HCT116 (cell line): ENCODE measurements at regions of chr16 and their contacts with region 1.

Region 1: DNA sequence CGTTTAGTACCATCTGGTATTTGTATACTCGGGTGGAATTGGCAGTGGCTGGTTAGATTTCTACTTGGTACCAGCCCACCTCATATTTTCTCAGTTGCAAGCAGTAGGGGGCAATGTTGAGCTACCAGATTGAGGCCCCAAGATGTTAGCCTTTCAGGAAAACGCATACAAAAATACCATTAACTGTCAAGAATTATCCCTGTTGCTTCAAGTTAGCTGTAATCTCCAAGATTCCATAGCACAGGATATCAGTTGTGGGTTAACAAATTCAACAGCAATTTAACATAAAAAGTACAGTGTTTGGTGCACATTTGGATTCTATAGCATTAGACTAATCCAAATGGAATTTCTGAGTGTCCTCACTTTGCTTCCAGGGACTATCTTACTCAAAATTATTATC is 188.2 kb downstream of the FTO start:
- DNase-seq: peak; percentile 22
- ATAC-seq: peak; percentile 81
- H3K4me3 ChIP-seq: no peak overlapping the region
- H3K27ac ChIP-seq: no peak overlapping the region
- H3K4me1 ChIP-seq: no peaks in the 10 kb centered on the region
- H3K27me3 ChIP-seq: no peaks in the 10 kb centered on the region
- CTCF ChIP-seq: peak; percentile 21 to 79 (median 72); a peak in 5 of 6 replicates
- POLR2A ChIP-seq: no peak
- RAD21 ChIP-seq: peak; percentile 71

Region 2: GRCh38 chr16:53781023-53781605 is 111.0 kb before region 1 on chr16:
- CTCF ChIA-PET with region 1: no interaction called
- POLR2A ChIA-PET with region 1: no interaction called
- RAD21 ChIA-PET with region 1: no interaction called
- intact Hi-C with region 1: loop called (anchors 1 kb)
- DNase-seq: no peak
- ATAC-seq: no peak
- H3K4me3 ChIP-seq: peak overlapping the region in 1 of 2 experiments; percentile 23; a peak in 1 of 4 replicates
- H3K27ac ChIP-seq: no peak overlapping the region
- H3K4me1 ChIP-seq: peaks cover 59 to 66% of the 10 kb centered on the region in 2 experiments
- H3K27me3 ChIP-seq: no peaks in the 10 kb centered on the region
- CTCF ChIP-seq: no peak
- POLR2A ChIP-seq: no peak
- RAD21 ChIP-seq: no peak

Region 3: DNA sequence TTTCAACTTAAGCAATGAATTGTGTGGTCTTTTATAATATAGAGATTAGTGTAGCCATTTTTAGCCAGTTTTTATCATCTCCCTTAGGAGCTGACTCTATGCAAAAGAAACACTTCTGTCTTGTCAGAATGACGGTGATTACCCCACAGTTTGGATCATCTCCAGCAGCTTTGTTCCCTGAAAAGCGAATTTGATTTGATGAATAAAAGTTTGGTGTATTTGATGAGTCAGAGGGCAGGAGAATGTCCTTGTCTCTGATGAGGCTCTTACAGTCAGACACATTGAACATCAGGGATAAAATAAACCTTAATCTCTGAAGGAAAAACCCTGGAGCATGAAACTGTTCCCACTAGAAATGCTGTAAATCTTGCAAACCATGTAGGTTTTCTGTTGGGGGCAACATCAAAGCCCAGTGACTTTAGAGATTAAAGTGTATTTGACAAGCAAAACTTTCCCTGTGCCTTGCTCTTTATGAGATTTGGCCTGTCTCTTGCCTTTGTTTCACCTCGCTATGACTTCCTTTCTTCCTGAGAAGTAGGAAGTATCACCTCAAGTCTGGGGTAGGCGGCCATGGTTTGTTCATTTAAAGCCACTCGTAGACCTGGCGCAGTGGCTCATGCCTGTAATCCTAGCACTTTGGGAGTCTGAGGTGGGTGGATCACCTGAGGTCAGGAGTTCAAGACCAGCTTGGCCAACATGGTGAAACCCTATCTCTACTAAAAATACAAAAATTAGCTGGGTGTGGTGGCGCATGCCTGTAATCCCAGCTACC is 21.1 kb after region 1 on chr16:
- CTCF ChIA-PET with region 1: no interaction called
- POLR2A ChIA-PET with region 1: no interaction called
- RAD21 ChIA-PET with region 1: no interaction called
- intact Hi-C with region 1: no loop called
- DNase-seq: no peak
- ATAC-seq: no peak
- H3K4me3 ChIP-seq: no peak overlapping the region
- H3K27ac ChIP-seq: no peak overlapping the region
- H3K4me1 ChIP-seq: peaks cover 0 to 5% of the 10 kb centered on the region in 2 experiments; a peak in 1 of 4 replicates
- H3K27me3 ChIP-seq: no peaks in the 10 kb centered on the region
- CTCF ChIP-seq: no peak
- POLR2A ChIP-seq: no peak
- RAD21 ChIP-seq: no peak

Region 4: GRCh38 chr16:54066451-54067105 is 174.4 kb after region 1 on chr16:
- CTCF ChIA-PET with region 1: no interaction called
- POLR2A ChIA-PET with region 1: no interaction called
- RAD21 ChIA-PET with region 1: no interaction called
- intact Hi-C with region 1: no loop called
- DNase-seq: no peak
- ATAC-seq: peak; percentile 46; the same call in 1 of the 2 replicates
- H3K4me3 ChIP-seq: no peak overlapping the region
- H3K27ac ChIP-seq: no peak overlapping the region
- H3K4me1 ChIP-seq: peaks cover 0 to 7% of the 10 kb centered on the region in 2 experiments; a peak in 2 of 4 replicates
- H3K27me3 ChIP-seq: no peaks in the 10 kb centered on the region
- CTCF ChIP-seq: no peak
- POLR2A ChIP-seq: no peak
- RAD21 ChIP-seq: no peak